ENCODE measurements at regions of chr16 and their contacts with region 1.

Region 1: GRCh38 chr16:84504420-84505248 is at the start of gene MEAK7:
- DNase-seq: peak; percentile 98 to 99 (median 99)
- ATAC-seq: peak; percentile 97 to 99 (median 99)
- H3K4me3 ChIP-seq: peak within 1 kb of the TSS; percentile 62 to 78 (median 70)
- H3K27ac ChIP-seq: peak within 1 kb of the TSS in 2 of 3 donors; percentile 31 to 58
- H3K4me1 ChIP-seq: no peaks in the 10 kb centered on the region
- H3K27me3 ChIP-seq: no peaks in the 10 kb centered on the region
- CTCF ChIP-seq: peak in 2 of 4 donors; percentile 12 to 18
- POLR2A ChIP-seq: peak; percentile 53
- total RNA-seq, gene MEAK7: 2.9 to 5.2 (median 3.4) TPM

Region 2: GRCh38 chr16:84341528-84342295 is 162.9 kb before region 1 on chr16:
- intact Hi-C with region 1: no loop called
- DNase-seq: no peak
- ATAC-seq: no peak
- H3K4me3 ChIP-seq: no peak overlapping the region
- H3K27ac ChIP-seq: no peak overlapping the region
- H3K4me1 ChIP-seq: no peaks in the 10 kb centered on the region
- H3K27me3 ChIP-seq: no peaks in the 10 kb centered on the region
- CTCF ChIP-seq: no peak
- POLR2A ChIP-seq: no peak

Region 3: DNA sequence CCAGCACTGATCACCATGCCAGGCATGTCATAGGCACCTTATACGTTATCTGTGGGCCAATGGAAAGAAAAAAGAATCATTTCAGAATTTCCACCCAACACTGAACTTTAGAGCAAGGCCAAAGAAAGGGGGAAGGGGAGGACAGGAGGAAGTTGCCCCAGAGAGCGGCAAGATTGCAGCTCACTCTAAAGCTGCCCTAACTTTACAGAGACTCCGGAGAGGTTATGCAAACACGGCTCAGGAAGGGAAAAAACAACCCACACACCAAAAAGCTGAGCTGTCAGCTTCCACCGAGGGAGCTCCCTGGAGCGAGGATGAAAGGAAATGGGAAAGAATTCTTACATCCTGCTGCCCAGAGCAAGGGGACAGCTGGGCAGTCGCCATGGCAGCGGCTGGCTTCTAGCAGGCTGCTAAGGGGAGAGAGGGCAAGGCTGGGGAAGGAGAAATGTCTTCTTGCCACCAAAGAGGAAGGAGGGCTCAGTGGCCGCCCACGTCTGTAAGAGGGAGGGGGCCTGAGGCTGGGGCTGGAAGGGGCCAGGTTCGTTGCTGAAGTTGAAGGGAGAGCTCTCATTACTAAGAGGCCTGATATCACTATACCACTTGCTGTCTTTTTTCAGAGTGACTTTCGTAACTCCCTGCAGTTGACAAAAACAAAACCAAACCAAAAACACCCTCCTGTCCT is 95.0 kb after region 1 on chr16:
- intact Hi-C with region 1: no loop called
- DNase-seq: peak in 2 of 3 donors; percentile 71 to 77
- ATAC-seq: peak; percentile 49 to 64 (median 57)
- H3K4me3 ChIP-seq: peak overlapping the region in 1 of 3 donors; percentile 16
- H3K27ac ChIP-seq: peak overlapping the region in 2 of 3 donors; percentile 70 to 72
- H3K4me1 ChIP-seq: peaks cover 0 to 14% (median 0%) of the 10 kb centered on the region in 4 donors
- H3K27me3 ChIP-seq: no peaks in the 10 kb centered on the region
- CTCF ChIP-seq: no peak
- POLR2A ChIP-seq: no peak

Region 4: GRCh38 chr16:84617791-84618580 is 113.4 kb after region 1 on chr16 and contains the start of gene COTL1:
- intact Hi-C with region 1: loop called in 1 of 2 experiments (anchors 5 kb)
- DNase-seq: peak; percentile 90 to 95 (median 95)
- ATAC-seq: peak; percentile 77 to 88 (median 82)
- H3K4me3 ChIP-seq: peak within 1 kb of the TSS; percentile 55 to 72 (median 66)
- H3K27ac ChIP-seq: peak within 1 kb of the TSS; percentile 6 to 43 (median 40)
- H3K4me1 ChIP-seq: peaks cover 0 to 7% (median 0%) of the 10 kb centered on the region in 4 donors
- H3K27me3 ChIP-seq: peaks cover 0 to 9% of the 10 kb centered on the region in 2 donors
- CTCF ChIP-seq: no peak
- POLR2A ChIP-seq: peak; percentile 84
- total RNA-seq, gene COTL1: 12.4 to 51.0 (median 18.6) TPM